HepG2 (cell line): ENCODE measurements at regions of chr16 and their contacts with region 1.

Region 1: DNA sequence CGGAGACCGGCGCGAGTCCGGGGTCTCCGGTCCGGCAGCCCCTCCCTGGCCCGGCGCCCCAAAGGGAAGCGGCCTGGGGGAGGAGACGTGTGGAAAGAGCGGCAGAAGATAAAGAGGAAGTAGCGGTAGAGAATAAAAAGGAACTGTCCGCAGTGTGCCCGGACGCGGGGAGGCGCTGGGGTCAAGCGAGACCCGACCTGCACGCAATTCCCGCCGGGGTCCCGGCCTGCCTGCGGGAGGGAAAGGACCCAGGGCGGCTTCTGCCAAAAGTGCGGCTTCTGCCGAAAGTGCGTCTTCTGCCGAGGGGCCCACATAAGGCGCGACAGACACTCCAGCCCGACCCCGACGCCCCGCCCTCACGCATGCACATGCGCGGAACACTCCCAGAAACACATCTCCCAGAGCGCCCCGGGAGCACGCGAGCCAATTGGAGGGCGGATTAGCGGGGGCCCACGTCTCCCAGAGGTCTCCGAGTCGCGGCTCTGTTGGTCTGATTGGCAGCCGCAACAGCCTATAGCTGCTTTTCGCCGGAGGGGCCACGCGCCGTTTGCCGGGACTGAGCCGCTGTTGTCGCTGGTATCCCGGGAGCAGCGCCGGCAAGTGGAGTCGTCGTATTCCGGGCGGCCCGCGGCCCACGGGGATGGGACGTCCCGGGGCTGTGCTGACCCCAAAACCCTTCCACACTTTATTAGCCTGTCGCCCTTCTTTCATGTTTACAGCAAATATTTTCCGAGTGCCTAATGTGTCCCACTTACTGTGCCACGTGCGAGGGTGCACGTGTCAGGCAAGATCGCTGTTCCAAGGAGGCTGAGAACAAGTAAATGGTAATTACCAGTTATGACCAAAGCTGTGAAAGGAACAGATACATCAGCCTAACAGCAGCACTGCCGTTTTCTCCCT is 8.0 kb upstream of the MEFV start:
- DNase-seq: peak; percentile 97
- ATAC-seq: peak; percentile 92
- H3K4me3 ChIP-seq: peak overlapping the region; percentile 60 to 79 (median 71)
- H3K27ac ChIP-seq: peak overlapping the region; percentile 95
- H3K4me1 ChIP-seq: peaks cover 71% of the 10 kb centered on the region
- H3K27me3 ChIP-seq: no peaks in the 10 kb centered on the region
- CTCF ChIP-seq: peak; percentile 56
- EP300 ChIP-seq: no peak
- POLR2A ChIP-seq: peak; percentile 82 to 94
- RAD21 ChIP-seq: peak; percentile 68

Region 2: GRCh38 chr16:3158471-3159314 is 105.7 kb before region 1 on chr16:
- CTCF ChIA-PET with region 1: no interaction called
- POLR2A ChIA-PET with region 1: interaction called, 10 read pairs
- in situ Hi-C with region 1: no loop called
- intact Hi-C with region 1: no loop called
- DNase-seq: peak; percentile 87
- ATAC-seq: peak; percentile 68
- H3K4me3 ChIP-seq: peak overlapping the region; percentile 68 to 87 (median 81)
- H3K27ac ChIP-seq: peak overlapping the region; percentile 91
- H3K4me1 ChIP-seq: peaks cover 46% of the 10 kb centered on the region
- H3K27me3 ChIP-seq: no peaks in the 10 kb centered on the region; a peak in 1 of 5 replicates
- CTCF ChIP-seq: 0 out of 2 replicates have a peak, but pooled peaks have one; percentile 15
- EP300 ChIP-seq: no peak
- POLR2A ChIP-seq: peak; percentile 43 to 62; a peak in 3 of 4 replicates
- RAD21 ChIP-seq: no peak

Region 3: GRCh38 chr16:3188925-3189825 is 75.2 kb before region 1 on chr16:
- CTCF ChIA-PET with region 1: no interaction called
- POLR2A ChIA-PET with region 1: interaction called, 4 read pairs
- in situ Hi-C with region 1: no loop called
- intact Hi-C with region 1: loop called (anchors 5 kb)
- DNase-seq: peak; percentile 60
- ATAC-seq: peak; percentile 26
- H3K4me3 ChIP-seq: peak overlapping the region; percentile 72 to 91 (median 76)
- H3K27ac ChIP-seq: peak overlapping the region; percentile 40
- H3K4me1 ChIP-seq: peaks cover 43% of the 10 kb centered on the region
- H3K27me3 ChIP-seq: no peaks in the 10 kb centered on the region
- CTCF ChIP-seq: no peak
- EP300 ChIP-seq: peak in 1 of 2 experiments; percentile 14; a peak in 1 of 4 replicates
- POLR2A ChIP-seq: no peak
- RAD21 ChIP-seq: no peak

Region 4: DNA sequence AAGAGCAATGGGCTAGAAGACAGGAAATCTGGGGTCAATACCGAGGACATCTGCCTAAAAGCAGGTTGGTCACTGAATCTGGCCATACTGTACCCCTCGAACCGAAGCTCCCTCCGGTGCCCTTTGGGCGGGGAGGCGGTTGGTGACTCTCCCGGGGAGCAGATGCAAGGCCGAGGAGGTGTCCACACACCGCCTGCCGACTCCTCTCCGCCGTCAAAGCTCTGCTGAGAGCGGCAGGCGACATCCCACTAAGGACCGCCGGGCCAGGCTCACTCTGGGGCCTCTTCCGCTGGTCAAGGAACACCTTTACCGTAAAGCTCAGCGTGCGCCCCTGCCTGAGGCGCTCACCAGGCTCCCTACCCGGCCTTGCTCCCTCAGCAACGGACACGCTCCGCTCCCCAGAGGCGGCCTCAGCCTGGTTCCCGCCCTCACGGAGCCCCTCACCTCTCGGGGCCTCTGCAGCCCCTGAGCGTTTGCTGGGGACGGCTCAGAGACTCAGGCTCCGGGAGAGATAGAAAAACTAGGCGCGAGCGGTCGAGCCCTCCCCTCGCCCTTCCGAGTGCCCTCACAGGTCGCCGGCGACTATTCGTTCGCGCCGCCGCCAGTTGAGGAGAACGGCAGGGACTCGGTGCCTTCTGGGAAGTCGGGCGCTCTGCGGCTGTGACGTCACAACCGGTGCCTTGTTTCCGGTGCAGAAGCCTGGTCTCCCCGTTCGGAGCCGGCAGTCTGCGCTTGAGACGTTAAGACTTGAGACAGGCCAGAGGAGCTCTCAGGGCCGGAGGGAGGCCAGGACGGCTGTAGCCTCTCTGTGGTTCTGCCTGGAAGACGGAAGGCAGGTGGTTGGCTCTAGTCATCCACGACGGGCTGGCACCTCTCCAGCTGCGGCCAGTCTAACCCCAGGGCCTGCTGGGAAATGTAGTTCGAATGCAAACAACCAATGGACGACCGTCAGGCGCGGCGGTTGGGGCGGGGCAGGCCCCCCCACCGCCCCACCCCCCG is 29.5 kb before region 1 on chr16 and contains the start of gene ZNF200:
- CTCF ChIA-PET with region 1: no interaction called
- POLR2A ChIA-PET with region 1: interaction called, 13 read pairs
- in situ Hi-C with region 1: no loop called
- intact Hi-C with region 1: no loop called
- DNase-seq: peak; percentile 91
- ATAC-seq: peak; percentile 97
- H3K4me3 ChIP-seq: peak within 1 kb of the TSS; percentile 86 to 99 (median 98)
- H3K27ac ChIP-seq: peak within 1 kb of the TSS; percentile 91
- H3K4me1 ChIP-seq: peaks cover 22% of the 10 kb centered on the region
- H3K27me3 ChIP-seq: no peaks in the 10 kb centered on the region; a peak in 1 of 5 replicates
- CTCF ChIP-seq: no peak
- EP300 ChIP-seq: no peak
- POLR2A ChIP-seq: peak; percentile 85 to 93
- RAD21 ChIP-seq: no peak; the same call in 1 of the 2 replicates
- total RNA-seq, gene ZNF200: 16.5 and 18.0 TPM in 2 replicates

Region 5: DNA sequence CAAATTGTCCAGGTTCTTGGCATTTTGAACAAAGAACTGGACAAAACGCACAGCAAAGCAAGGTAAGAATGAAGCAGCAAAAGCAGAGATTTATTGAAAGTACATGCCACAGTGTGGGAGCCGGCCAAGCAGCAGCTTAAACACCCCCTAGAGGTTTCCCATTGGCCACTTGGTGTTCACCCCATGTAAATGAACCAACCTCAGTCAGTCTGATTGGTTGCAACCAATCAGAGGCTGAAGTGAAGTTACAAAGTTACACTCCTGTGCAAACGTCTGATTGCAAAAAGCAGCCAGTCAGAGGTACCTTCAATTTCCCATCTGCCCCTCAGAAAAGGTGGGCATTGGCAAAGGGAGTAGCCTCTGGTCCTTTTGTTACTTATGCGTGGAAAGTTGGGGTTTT is 10.1 kb after region 1 on chr16:
- CTCF ChIA-PET with region 1: no interaction called
- POLR2A ChIA-PET with region 1: interaction called, 26 read pairs
- in situ Hi-C with region 1: no loop called
- intact Hi-C with region 1: no loop called
- DNase-seq: peak; percentile 91
- ATAC-seq: peak; percentile 100
- H3K4me3 ChIP-seq: peak overlapping the region; percentile 43 to 60 (median 52)
- H3K27ac ChIP-seq: peak overlapping the region; percentile 89
- H3K4me1 ChIP-seq: peaks cover 52% of the 10 kb centered on the region
- H3K27me3 ChIP-seq: no peaks in the 10 kb centered on the region; a peak in 1 of 5 replicates
- CTCF ChIP-seq: no peak
- EP300 ChIP-seq: 0 out of 4 replicates have a peak, but pooled peaks of 1 of the 2 experiments have one; percentile 13
- POLR2A ChIP-seq: peak; percentile 48 to 84; a peak in 3 of 4 replicates
- RAD21 ChIP-seq: no peak

Region 6: DNA sequence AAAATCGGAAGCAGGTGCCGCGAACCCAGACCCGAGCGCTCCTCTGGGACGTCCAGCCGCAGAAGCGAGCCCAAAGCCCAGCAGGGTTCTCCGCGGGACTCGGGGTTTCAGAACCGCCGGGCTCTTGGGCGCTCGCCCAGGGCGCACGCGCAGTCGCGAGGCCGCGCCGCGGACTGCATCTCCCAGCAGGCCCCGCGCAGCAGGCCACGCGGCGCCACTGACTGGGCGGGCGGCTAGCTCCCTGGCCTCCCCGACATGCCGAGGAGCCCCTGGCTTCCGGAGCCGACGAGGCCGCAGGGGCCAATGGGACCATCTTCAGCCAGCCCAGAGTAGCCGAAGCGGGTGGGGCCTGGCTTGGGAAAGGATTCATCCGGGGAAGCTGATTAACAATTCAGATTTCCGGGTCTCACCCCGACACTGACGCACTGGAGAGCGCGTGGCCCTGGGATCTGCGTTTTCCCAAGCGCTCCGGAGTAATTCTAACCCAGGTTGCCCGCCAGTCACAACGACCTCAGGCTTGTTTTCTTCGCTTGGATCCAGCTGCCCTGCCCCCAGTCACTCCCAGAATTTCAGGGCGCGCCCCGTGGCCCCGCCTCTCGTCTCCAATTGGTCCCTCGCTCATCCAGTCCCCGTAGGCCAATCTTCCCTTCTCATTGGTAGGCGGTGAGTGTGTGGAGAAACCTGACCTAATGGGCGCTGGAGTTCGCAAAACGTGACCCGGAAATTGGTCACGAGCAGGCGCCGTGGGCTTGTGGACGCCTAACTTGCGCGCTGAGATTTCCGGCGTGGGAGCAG is 18.5 kb after region 1 on chr16 and contains the start of gene ZNF263:
- CTCF ChIA-PET with region 1: no interaction called
- POLR2A ChIA-PET with region 1: interaction called, 64 read pairs
- in situ Hi-C with region 1: no loop called
- intact Hi-C with region 1: loop called (anchors 2 kb)
- DNase-seq: peak; percentile 97
- ATAC-seq: peak; percentile 93
- H3K4me3 ChIP-seq: peak within 1 kb of the TSS; percentile 79 to 100 (median 99)
- H3K27ac ChIP-seq: peak within 1 kb of the TSS; percentile 99
- H3K4me1 ChIP-seq: peaks cover 45% of the 10 kb centered on the region
- H3K27me3 ChIP-seq: no peaks in the 10 kb centered on the region; a peak in 1 of 5 replicates
- CTCF ChIP-seq: peak; percentile 16; the same call in 1 of the 2 replicates
- EP300 ChIP-seq: peak in 1 of 2 experiments; percentile 29; a peak in 1 of 4 replicates
- POLR2A ChIP-seq: peak; percentile 68 to 89
- RAD21 ChIP-seq: peak; percentile 28
- total RNA-seq, gene ZNF263: 40.3 and 41.2 TPM in 2 replicates

Region 7: DNA sequence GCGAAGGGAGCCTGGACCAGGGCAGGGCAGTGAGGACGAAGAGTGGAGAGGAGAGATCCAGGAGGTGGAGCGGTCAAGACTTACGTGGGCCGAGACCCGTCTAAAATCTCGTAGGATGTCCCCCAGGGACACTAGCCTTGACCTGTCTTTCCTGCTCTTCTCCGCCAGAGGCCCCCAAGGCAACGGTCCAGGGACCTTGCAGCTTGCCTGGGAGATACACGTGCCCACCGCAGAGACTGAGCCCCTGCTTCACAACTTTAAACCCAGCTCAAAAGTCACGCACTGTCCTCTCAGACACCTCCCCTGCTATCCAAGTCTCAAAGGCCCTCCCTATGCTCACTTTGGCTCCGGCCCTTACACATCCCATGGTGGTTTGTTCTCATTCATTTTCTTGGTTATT is 31.4 kb after region 1 on chr16:
- CTCF ChIA-PET with region 1: no interaction called
- POLR2A ChIA-PET with region 1: no interaction called
- in situ Hi-C with region 1: no loop called
- intact Hi-C with region 1: no loop called
- DNase-seq: no peak
- ATAC-seq: peak; percentile 23; the same call in 1 of the 3 replicates
- H3K4me3 ChIP-seq: no peak overlapping the region
- H3K27ac ChIP-seq: no peak overlapping the region
- H3K4me1 ChIP-seq: peaks cover 7% of the 10 kb centered on the region
- H3K27me3 ChIP-seq: no peaks in the 10 kb centered on the region
- CTCF ChIP-seq: no peak
- EP300 ChIP-seq: no peak
- POLR2A ChIP-seq: no peak
- RAD21 ChIP-seq: no peak

Region 8: DNA sequence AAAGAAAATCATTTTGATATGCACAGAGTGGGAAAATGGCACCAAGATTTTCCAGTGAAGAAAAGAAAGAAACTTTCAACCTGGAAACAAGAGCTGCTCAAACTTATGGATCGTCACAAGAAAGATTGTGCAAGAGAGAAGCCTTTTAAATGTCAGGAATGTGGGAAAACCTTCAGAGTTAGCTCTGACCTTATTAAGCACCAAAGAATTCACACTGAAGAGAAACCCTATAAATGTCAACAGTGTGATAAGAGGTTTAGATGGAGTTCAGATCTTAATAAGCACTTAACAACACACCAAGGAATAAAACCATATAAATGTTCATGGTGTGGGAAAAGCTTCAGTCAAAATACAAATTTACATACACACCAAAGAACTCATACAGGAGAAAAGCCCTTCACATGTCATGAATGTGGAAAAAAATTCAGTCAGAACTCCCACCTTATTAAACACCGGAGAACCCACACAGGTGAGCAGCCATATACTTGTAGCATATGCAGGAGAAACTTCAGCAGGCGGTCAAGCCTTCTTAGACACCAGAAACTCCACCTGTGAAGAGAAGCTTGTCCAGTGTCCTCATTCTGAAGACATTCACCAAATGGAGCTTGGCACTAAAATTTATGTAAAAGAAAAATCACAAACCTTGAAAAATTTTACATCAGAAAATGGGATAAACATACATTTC is 53.1 kb after region 1 on chr16:
- CTCF ChIA-PET with region 1: no interaction called
- POLR2A ChIA-PET with region 1: no interaction called
- in situ Hi-C with region 1: no loop called
- intact Hi-C with region 1: no loop called
- DNase-seq: no peak
- ATAC-seq: no peak
- H3K4me3 ChIP-seq: no peak overlapping the region
- H3K27ac ChIP-seq: no peak overlapping the region
- H3K4me1 ChIP-seq: peaks cover 16% of the 10 kb centered on the region
- H3K27me3 ChIP-seq: no peaks in the 10 kb centered on the region
- CTCF ChIP-seq: no peak
- EP300 ChIP-seq: no peak
- POLR2A ChIP-seq: no peak
- RAD21 ChIP-seq: no peak

Region 9: DNA sequence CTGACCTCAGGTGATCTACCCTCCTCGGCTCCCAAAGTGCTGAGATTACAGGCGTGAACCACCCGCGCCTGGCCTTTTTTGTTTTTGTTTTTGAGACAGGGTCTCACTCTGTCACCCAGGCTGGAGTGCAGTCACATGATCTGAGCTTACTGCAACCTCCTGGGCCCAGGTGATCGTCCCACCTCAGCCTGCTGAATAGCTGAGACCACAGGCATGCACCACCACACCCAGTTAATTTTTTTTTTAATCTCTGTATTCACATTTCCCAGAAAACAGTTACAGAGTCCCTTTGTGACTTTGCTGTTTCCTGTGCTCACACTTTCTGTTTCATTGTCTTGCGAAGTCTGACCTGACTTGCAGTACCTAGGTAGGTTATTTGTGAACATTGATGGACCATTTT is 239.1 kb after region 1 on chr16:
- CTCF ChIA-PET with region 1: no interaction called
- POLR2A ChIA-PET with region 1: no interaction called
- in situ Hi-C with region 1: no loop called
- intact Hi-C with region 1: loop called (anchors 2 kb)
- DNase-seq: no peak
- ATAC-seq: no peak
- H3K4me3 ChIP-seq: no peak overlapping the region
- H3K27ac ChIP-seq: no peak overlapping the region
- H3K4me1 ChIP-seq: peaks cover 15% of the 10 kb centered on the region
- H3K27me3 ChIP-seq: no peaks in the 10 kb centered on the region
- CTCF ChIP-seq: no peak
- EP300 ChIP-seq: no peak
- POLR2A ChIP-seq: no peak
- RAD21 ChIP-seq: no peak